ENCODE measurements at regions of chr2 and their contacts with region 1.

Region 1: DNA sequence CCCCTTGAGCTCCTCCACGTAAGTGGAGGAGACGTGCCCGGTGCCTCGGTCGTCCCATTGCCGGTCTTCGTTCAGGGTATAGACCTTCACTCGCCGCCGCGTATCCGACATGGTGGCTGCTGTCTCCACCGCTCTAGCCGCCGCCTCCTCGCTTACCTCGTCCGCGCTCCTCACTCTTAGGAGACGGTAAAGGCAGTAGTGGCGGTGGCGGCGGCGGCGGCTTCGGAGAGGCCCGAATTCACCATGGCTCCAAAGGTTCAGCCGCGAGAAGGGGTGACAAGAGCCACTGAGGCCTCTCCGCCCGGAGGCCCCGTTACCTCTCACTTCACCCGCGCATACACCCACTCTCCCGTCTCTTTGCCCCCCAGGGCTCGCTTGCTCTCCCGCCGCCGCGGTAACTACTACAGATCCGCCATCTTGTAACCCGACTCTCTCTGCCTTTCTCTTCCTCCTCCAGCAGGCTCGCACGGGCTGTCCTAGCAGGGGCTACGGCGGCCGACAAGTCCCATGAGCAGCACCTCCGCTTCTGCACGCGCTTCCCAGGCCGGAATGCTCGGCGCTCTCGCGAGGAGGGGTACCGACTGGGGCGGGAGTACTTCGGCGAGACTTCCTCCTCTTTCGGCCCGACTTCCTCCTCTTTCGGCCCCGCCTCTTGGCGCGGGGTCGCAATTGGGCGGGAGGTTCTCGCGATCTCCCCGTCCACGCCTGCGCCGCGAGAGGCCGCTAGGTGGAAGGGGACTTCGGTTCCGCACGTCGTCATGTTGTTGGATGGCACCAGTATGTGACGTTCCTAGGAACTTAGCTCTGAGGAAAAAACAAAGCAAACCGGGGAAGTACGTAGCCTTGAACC is at the start of gene PPP4R3B:
- DNase-seq: peak; percentile 96 to 100 (median 98)
- ATAC-seq: peak; percentile 83
- H3K4me3 ChIP-seq: peak within 1 kb of the TSS; percentile 95 to 97
- H3K4me3 Mint-ChIP-seq: no peak within 1 kb of the TSS
- H3K27ac ChIP-seq: peak within 1 kb of the TSS; percentile 97 to 99
- H3K27ac Mint-ChIP-seq: no peak within 1 kb of the TSS
- H3K4me1 ChIP-seq: peaks cover 50% of the 10 kb centered on the region
- H3K4me1 Mint-ChIP-seq: peaks cover 63% of the 10 kb centered on the region
- H3K27me3 ChIP-seq: no peaks in the 10 kb centered on the region
- H3K27me3 Mint-ChIP-seq: no peaks in the 10 kb centered on the region
- CTCF ChIP-seq: peak; percentile 21
- total RNA-seq, gene PPP4R3B: 39.0 to 43.9 TPM

Region 2: GRCh38 chr2:53786705-53787612 is 1830.4 kb before region 1 on chr2 and contains the starts of genes ASB3 and ERLEC1:
- CTCF ChIA-PET with region 1: no interaction called
- POLR2A ChIA-PET with region 1: no interaction called
- intact Hi-C with region 1: loop called (anchors 2 to 5 kb)
- DNase-seq: peak; percentile 78 to 95 (median 90)
- ATAC-seq: peak; percentile 88
- H3K4me3 ChIP-seq: peak within 1 kb of the TSS; percentile 94 to 96
- H3K4me3 Mint-ChIP-seq: peak within 1 kb of the TSS; percentile 95
- H3K27ac ChIP-seq: peak within 1 kb of the TSS; percentile 88 to 89
- H3K27ac Mint-ChIP-seq: peak within 1 kb of the TSS; percentile 95
- H3K4me1 ChIP-seq: peaks cover 30% of the 10 kb centered on the region
- H3K4me1 Mint-ChIP-seq: peaks cover 63% of the 10 kb centered on the region
- H3K27me3 ChIP-seq: no peaks in the 10 kb centered on the region
- H3K27me3 Mint-ChIP-seq: no peaks in the 10 kb centered on the region
- CTCF ChIP-seq: no peak
- total RNA-seq, gene ASB3: 25.0 to 26.2 TPM
- total RNA-seq, gene ERLEC1: 24.1 to 27.1 TPM

Region 3: GRCh38 chr2:54330162-54330925 is 1287.1 kb before region 1 on chr2:
- CTCF ChIA-PET with region 1: no interaction called
- POLR2A ChIA-PET with region 1: no interaction called
- intact Hi-C with region 1: loop called in 1 of 2 experiments (anchors 5 kb)
- DNase-seq: peak; percentile 65 to 94 (median 85)
- ATAC-seq: peak; percentile 96
- H3K4me3 ChIP-seq: peak overlapping the region; percentile 58 to 64
- H3K4me3 Mint-ChIP-seq: peak overlapping the region; percentile 88
- H3K27ac ChIP-seq: peak overlapping the region in 1 of 2 experiments; percentile 39
- H3K27ac Mint-ChIP-seq: peak overlapping the region; percentile 52
- H3K4me1 ChIP-seq: peaks cover 11% of the 10 kb centered on the region
- H3K4me1 Mint-ChIP-seq: peaks cover 14% of the 10 kb centered on the region
- H3K27me3 ChIP-seq: no peaks in the 10 kb centered on the region
- H3K27me3 Mint-ChIP-seq: peaks cover 9% of the 10 kb centered on the region
- CTCF ChIP-seq: no peak

Region 4: DNA sequence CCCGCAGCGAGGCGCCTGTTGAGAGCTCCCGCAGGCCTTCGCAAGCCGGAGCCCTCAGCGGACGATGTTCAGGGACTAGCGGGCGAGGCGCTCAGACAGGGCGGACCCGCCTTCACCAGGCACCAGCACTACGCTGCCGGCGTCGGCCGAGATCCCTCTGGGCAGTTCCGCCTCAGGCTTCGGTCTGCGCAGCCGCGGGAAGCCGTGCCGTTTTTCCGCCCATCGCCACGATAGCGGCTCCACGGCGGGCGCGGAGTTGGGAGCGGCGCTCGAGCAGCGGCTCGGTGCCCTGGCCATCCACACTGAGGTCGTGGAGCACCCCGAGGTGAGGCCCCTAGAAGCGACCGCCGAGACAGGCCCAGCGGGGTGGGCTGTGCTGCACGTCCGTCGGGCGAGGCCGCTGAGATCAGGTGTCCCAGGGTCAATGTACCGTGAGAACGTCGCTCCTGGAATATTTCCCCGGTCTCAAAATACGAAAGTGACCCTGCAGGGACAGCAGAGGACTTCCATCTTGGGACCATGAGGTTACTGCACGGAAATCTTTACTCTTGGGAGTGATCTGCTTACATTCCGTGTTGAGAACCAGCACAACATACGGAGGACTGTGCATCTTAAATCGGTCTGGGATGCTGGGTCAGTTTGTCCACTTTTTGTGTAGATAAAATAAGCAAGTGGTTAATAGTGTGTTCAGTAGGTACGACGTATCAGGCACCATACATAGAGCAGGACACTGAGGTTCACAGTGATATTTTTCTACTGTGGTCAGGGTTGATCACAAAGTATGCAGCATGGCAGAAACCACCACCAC is 335.1 kb before region 1 on chr2:
- CTCF ChIA-PET with region 1: no interaction called
- POLR2A ChIA-PET with region 1: interaction called, 3 read pairs
- intact Hi-C with region 1: loop called (anchors 5 kb)
- DNase-seq: peak; percentile 77 to 93 (median 87)
- ATAC-seq: peak; percentile 99
- H3K4me3 ChIP-seq: peak overlapping the region; percentile 62 to 70
- H3K4me3 Mint-ChIP-seq: peak overlapping the region; percentile 94
- H3K27ac ChIP-seq: peak overlapping the region; percentile 72 to 96
- H3K27ac Mint-ChIP-seq: peak overlapping the region; percentile 99
- H3K4me1 ChIP-seq: peaks cover 7% of the 10 kb centered on the region
- H3K4me1 Mint-ChIP-seq: peaks cover 31% of the 10 kb centered on the region
- H3K27me3 ChIP-seq: no peaks in the 10 kb centered on the region
- H3K27me3 Mint-ChIP-seq: no peaks in the 10 kb centered on the region
- CTCF ChIP-seq: no peak

Region 5: DNA sequence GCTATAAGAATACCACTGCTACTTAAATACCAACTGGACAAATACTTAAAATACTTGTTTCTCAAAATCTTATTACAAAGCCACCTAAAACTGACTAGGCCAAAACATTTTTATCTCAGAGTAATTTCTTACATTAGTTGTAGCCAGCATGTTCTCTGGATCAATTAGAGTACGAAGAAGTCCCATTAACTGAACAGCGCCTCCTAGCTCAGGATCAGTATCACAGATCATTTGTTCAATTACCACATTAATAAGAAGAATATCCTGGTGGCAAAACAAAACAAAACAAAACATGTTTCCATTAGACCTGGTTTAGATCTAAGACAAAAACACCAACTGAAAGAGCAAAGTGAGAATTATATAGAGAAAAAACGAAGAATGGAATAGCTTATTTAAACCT is 36.0 kb before region 1 on chr2:
- CTCF ChIA-PET with region 1: no interaction called
- POLR2A ChIA-PET with region 1: no interaction called
- intact Hi-C with region 1: loop called in 1 of 2 experiments (anchors 5 kb)
- DNase-seq: peak in 2 of 9 experiments; percentile 17 to 28
- ATAC-seq: peak; percentile 31
- H3K4me3 ChIP-seq: no peak overlapping the region
- H3K4me3 Mint-ChIP-seq: no peak overlapping the region
- H3K27ac ChIP-seq: no peak overlapping the region
- H3K27ac Mint-ChIP-seq: peak overlapping the region; percentile 43
- H3K4me1 ChIP-seq: peaks cover 4% of the 10 kb centered on the region
- H3K4me1 Mint-ChIP-seq: peaks cover 28% of the 10 kb centered on the region
- H3K27me3 ChIP-seq: no peaks in the 10 kb centered on the region
- H3K27me3 Mint-ChIP-seq: no peaks in the 10 kb centered on the region
- CTCF ChIP-seq: no peak

Region 6: GRCh38 chr2:55668956-55669355 is 51.6 kb after region 1 on chr2:
- CTCF ChIA-PET with region 1: no interaction called
- POLR2A ChIA-PET with region 1: no interaction called
- intact Hi-C with region 1: no loop called
- DNase-seq: no peak
- ATAC-seq: no peak
- H3K4me3 ChIP-seq: no peak overlapping the region
- H3K4me3 Mint-ChIP-seq: no peak overlapping the region
- H3K27ac ChIP-seq: no peak overlapping the region
- H3K27ac Mint-ChIP-seq: no peak overlapping the region
- H3K4me1 ChIP-seq: no peaks in the 10 kb centered on the region
- H3K4me1 Mint-ChIP-seq: no peaks in the 10 kb centered on the region
- H3K27me3 ChIP-seq: no peaks in the 10 kb centered on the region
- H3K27me3 Mint-ChIP-seq: no peaks in the 10 kb centered on the region
- CTCF ChIP-seq: no peak

Measured in CD8-positive, alpha-beta T cell (primary cell).